SK-N-SH (cell line): ENCODE measurements at regions of chr5 and their contacts with region 1.

Region 1: GRCh38 chr5:160342403-160342941 is 28.0 kb downstream of the C1QTNF2 start:
- DNase-seq: no peak
- H3K4me3 ChIP-seq: no peak overlapping the region
- H3K27ac ChIP-seq: no peak overlapping the region
- H3K4me1 ChIP-seq: peaks cover 0 to 9% of the 10 kb centered on the region in 2 experiments; a peak in 3 of 4 replicates
- H3K27me3 ChIP-seq: no peaks in the 10 kb centered on the region
- CTCF ChIP-seq: no peak
- EP300 ChIP-seq: no peak
- RAD21 ChIP-seq: no peak

Region 2: DNA sequence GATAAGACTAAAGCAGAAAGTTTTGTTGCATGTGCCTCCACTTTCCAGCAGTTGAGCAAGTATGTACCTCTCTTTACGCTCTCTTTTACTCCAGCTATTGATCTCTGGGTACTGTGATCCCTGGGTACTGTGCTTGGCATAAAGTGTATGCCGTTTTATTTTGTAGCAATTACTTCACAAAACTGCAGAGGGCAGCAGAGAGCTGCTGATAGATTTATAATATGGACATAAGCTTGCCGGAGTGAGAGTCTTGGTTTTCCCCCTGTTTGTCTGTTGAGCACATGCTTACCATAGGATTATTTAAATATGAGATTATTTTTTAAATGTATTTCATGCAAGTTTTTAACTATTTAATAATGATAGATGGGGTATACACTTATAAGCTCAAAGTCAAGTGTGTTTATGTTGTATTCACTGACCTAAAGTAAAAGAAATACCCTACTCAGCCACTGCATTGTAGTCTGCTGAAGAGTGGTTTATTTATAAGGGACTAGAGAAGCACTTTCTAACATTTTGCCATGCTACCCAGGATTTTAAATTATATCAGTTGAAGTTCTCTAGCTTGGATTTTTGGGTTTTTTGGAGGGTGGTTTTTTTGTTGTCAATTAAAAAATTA is 320.5 kb before region 1 on chr5:
- CTCF ChIA-PET with region 1: interaction called, 79 read pairs
- POLR2A ChIA-PET with region 1: no interaction called
- DNase-seq: peak; percentile 58
- H3K4me3 ChIP-seq: no peak overlapping the region
- H3K27ac ChIP-seq: no peak overlapping the region
- H3K4me1 ChIP-seq: peaks cover 0 to 3% of the 10 kb centered on the region in 2 experiments; a peak in 2 of 4 replicates
- H3K27me3 ChIP-seq: no peaks in the 10 kb centered on the region
- CTCF ChIP-seq: peak; percentile 83
- EP300 ChIP-seq: no peak
- RAD21 ChIP-seq: peak; percentile 88

Region 3: DNA sequence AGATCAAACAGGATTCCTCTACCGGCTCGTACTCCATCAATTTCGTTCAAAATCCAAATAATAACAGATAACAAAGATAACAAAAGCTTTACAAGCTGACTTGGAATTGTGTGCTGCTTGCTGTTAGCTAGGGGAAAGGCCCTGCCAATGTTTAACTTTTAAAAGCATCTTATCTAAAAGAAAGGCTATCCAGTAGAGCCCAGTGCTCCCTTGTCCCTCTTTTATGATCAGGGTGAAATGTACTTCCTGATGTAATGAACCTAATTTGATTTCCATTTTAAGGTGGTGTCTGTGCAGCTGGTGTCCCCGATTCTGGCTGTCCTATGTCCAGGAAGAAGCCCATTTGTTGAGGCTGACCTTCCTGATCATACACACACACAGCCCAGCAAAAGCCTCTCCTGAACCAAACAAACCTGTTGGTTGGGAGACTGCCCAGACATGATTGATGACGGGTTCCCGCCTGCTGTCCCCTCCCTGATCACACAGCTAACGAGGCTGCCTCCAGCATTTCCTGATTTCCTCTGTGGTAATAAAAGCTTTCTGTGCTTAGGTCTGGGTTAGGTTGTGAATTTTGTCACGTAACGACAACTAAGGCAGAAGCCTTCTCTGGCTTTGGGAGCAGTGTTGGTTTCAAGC is 277.4 kb before region 1 on chr5:
- CTCF ChIA-PET with region 1: interaction called, 10 read pairs
- POLR2A ChIA-PET with region 1: no interaction called
- DNase-seq: peak; percentile 23
- H3K4me3 ChIP-seq: no peak overlapping the region
- H3K27ac ChIP-seq: peak overlapping the region in 1 of 2 experiments; percentile 75; a peak in 2 of 4 replicates
- H3K4me1 ChIP-seq: peaks cover 0 to 19% of the 10 kb centered on the region in 2 experiments; a peak in 2 of 4 replicates
- H3K27me3 ChIP-seq: no peaks in the 10 kb centered on the region
- CTCF ChIP-seq: no peak
- EP300 ChIP-seq: no peak
- RAD21 ChIP-seq: no peak

Region 4: GRCh38 chr5:160175438-160176218 is 166.8 kb before region 1 on chr5:
- CTCF ChIA-PET with region 1: interaction called, 10 read pairs
- POLR2A ChIA-PET with region 1: no interaction called
- DNase-seq: peak; percentile 66
- H3K4me3 ChIP-seq: no peak overlapping the region
- H3K27ac ChIP-seq: peak overlapping the region; percentile 11 to 68; a peak in 3 of 4 replicates
- H3K4me1 ChIP-seq: peaks cover 15 to 16% of the 10 kb centered on the region in 2 experiments
- H3K27me3 ChIP-seq: no peaks in the 10 kb centered on the region
- CTCF ChIP-seq: no peak
- EP300 ChIP-seq: peak in 1 of 2 experiments; percentile 19; a peak in 1 of 4 replicates
- RAD21 ChIP-seq: 0 out of 2 replicates have a peak, but pooled peaks have one; percentile 10

Region 5: GRCh38 chr5:160245506-160246086 is 96.9 kb before region 1 on chr5:
- CTCF ChIA-PET with region 1: interaction called, 78 read pairs
- POLR2A ChIA-PET with region 1: interaction called, 3 read pairs
- DNase-seq: peak; percentile 62
- H3K4me3 ChIP-seq: no peak overlapping the region
- H3K27ac ChIP-seq: peak overlapping the region in 1 of 2 experiments; percentile 73; a peak in 2 of 4 replicates
- H3K4me1 ChIP-seq: peaks cover 0 to 19% of the 10 kb centered on the region in 2 experiments; a peak in 1 of 4 replicates
- H3K27me3 ChIP-seq: no peaks in the 10 kb centered on the region
- CTCF ChIP-seq: no peak
- EP300 ChIP-seq: no peak
- RAD21 ChIP-seq: 0 out of 2 replicates have a peak, but pooled peaks have one; percentile 6

Region 6: DNA sequence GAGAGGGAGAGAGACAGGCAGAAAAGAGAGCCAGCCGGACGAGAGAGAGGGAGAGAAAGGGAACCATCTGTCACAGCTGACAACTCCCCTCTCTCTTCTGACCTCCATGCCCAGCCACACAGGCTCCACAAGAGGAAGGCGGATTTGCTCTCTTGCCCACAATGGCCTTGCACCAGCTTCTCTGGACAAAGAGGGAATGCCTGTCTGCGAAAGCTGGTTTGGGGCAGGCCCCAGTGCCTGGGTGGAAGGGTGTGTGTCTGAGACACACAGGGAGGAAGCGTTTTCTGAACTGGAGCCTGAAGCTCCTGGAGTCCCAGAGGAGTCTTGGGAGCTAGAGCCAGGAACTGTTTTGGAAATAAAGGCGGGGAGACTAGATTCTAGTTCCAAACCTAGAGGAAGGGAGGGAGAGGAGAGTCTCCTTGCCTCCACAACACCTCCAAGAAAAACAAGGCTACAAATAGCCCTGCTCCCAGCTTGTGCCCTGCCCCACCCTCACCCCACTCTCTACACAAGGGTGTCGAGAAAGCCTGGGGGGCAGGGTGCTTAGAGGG is 15.5 kb after region 1 on chr5:
- CTCF ChIA-PET with region 1: interaction called, 10 read pairs
- POLR2A ChIA-PET with region 1: no interaction called
- DNase-seq: no peak
- H3K4me3 ChIP-seq: no peak overlapping the region
- H3K27ac ChIP-seq: no peak overlapping the region
- H3K4me1 ChIP-seq: peaks cover 0 to 7% of the 10 kb centered on the region in 2 experiments; a peak in 1 of 4 replicates
- H3K27me3 ChIP-seq: no peaks in the 10 kb centered on the region
- CTCF ChIP-seq: no peak
- EP300 ChIP-seq: no peak
- RAD21 ChIP-seq: no peak

Region 7: GRCh38 chr5:160390787-160391696 is 48.6 kb after region 1 on chr5:
- CTCF ChIA-PET with region 1: interaction called, 26 read pairs
- POLR2A ChIA-PET with region 1: no interaction called
- DNase-seq: no peak
- H3K4me3 ChIP-seq: no peak overlapping the region
- H3K27ac ChIP-seq: no peak overlapping the region
- H3K4me1 ChIP-seq: peaks cover 0 to 3% of the 10 kb centered on the region in 2 experiments; a peak in 2 of 4 replicates
- H3K27me3 ChIP-seq: no peaks in the 10 kb centered on the region
- CTCF ChIP-seq: peak; percentile 76
- EP300 ChIP-seq: no peak
- RAD21 ChIP-seq: peak; percentile 77

Region 8: DNA sequence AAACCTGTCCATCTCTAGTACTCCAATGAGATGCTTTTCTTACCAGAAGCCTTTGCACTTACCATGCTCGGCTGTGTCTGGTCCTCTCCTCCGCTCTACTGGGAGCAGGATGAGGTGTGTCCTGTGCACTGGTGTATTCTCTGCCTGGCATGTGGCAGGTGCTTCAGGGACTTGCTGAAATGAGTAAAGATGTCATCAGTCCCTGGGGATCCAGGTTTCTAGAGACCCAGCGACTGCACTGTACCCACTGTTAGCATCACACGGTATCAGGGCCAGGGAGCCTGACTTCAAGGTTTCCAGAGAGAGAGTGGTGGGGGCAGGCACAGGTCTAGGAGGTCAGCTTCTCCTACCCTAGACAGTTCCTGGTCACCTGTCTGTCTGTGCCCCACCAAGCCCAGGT is 89.7 kb after region 1 on chr5:
- CTCF ChIA-PET with region 1: no interaction called
- POLR2A ChIA-PET with region 1: no interaction called
- DNase-seq: no peak
- H3K4me3 ChIP-seq: no peak overlapping the region
- H3K27ac ChIP-seq: no peak overlapping the region
- H3K4me1 ChIP-seq: no peaks in the 10 kb centered on the region
- H3K27me3 ChIP-seq: no peaks in the 10 kb centered on the region
- CTCF ChIP-seq: no peak
- EP300 ChIP-seq: no peak
- RAD21 ChIP-seq: no peak